Ascending aorta (tissue), 2 donors: ENCODE measurements at regions of chr13 and their contacts with region 1.

Region 1: DNA sequence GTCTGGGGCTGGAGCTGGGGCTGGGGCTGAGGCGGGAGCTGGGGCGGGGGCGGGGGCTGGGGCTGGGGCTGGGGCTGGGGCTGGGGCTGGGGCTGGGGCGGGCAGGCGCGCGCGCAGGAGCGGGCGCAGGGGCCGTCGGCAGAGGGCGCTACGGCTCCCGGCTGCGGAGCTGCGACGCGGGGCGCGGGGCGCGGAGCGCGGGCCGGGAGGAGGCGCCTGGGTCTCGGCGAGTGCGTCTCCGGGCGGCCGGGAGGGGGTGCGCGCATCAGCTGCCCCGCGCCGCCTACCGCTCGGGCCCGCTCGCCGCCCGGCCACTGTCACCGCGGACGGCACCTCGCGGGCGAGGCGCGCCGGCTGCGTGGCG is 422 bp upstream of the MTUS2 start:
- DNase-seq: peak in 1 of 2 donors; percentile 76
- H3K4me3 ChIP-seq: peak overlapping the region; percentile 63 to 84
- H3K27ac ChIP-seq: peak overlapping the region; percentile 44 to 78
- H3K4me1 ChIP-seq: peaks cover 0 to 5% of the 10 kb centered on the region in 2 donors
- H3K27me3 ChIP-seq: no peaks in the 10 kb centered on the region
- CTCF ChIP-seq: peak in 2 of 3 experiments; percentile 10 to 75

Region 2: DNA sequence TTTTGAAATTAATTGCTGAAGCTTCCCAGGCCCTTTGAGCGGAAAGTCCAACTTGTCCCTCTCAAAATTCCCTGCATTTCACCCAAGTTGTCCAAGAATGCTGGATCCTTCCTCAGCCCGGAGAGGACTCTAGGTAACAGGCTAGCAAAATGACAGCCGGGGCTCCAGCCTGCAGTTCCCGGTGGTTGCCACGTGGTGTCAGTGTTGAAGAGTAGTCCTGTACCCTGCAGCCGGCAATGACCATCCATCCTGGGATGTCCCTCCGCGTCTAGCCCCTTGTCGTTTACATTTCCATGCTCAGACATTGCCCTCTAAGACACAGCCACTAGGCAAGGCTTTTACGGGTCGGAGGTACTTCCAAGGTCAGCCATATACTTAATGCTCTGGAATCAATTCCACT is 1338.0 kb before region 1 on chr13:
- intact Hi-C with region 1: no loop called
- DNase-seq: peak in 1 of 2 donors; percentile 63
- H3K4me3 ChIP-seq: no peak overlapping the region
- H3K27ac ChIP-seq: no peak overlapping the region
- H3K4me1 ChIP-seq: no peaks in the 10 kb centered on the region
- H3K27me3 ChIP-seq: no peaks in the 10 kb centered on the region
- CTCF ChIP-seq: peak in 2 of 3 experiments; percentile 21 to 29

Region 3: GRCh38 chr13:28872427-28873176 is 52.9 kb after region 1 on chr13:
- intact Hi-C with region 1: loop called (anchors 2 kb)
- DNase-seq: no peak
- H3K4me3 ChIP-seq: no peak overlapping the region
- H3K27ac ChIP-seq: no peak overlapping the region
- H3K4me1 ChIP-seq: peaks cover 0 to 4% of the 10 kb centered on the region in 2 donors
- H3K27me3 ChIP-seq: no peaks in the 10 kb centered on the region
- CTCF ChIP-seq: no peak

Region 4: DNA sequence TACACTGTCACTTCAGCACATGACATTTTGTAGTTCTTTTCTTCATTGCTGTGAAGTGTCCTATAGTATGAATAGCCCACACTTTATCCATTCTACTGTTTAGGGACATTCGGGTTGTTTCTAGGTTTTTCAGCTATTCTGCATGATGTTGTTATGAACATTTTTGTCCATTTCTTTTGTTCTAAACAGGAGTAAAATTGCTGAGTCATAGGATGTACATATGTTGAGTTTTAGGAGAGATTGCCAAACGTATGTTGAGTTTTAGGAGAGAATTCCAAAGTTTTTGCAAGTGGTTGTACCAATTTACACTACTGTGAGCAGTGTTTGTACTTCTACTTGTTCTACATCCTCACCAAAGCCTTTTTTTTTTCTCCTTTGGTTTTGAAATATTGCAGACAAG is 115.4 kb after region 1 on chr13:
- intact Hi-C with region 1: loop called (anchors 5 kb)
- DNase-seq: no peak
- H3K4me3 ChIP-seq: no peak overlapping the region
- H3K27ac ChIP-seq: no peak overlapping the region
- H3K4me1 ChIP-seq: no peaks in the 10 kb centered on the region
- H3K27me3 ChIP-seq: no peaks in the 10 kb centered on the region
- CTCF ChIP-seq: no peak

Region 5: DNA sequence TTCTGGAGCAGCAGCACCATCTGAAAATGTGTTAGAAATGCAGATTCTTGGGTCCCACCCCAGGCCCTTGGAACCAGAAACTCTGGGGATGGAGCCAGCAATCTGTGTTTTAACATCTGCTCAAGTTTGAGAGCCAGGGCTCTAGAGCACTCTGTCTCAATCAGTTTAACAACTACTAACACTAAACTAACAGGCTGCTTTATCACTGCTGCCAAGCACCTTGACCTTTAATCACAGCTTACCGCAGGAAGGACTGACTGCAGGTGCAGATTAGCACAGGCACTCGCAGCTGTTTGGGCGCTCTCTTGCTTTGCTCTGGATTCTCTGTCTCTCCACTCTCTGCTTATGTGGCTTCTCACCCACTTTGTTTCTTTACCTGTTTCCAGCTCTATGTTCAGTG is 163.9 kb after region 1 on chr13:
- intact Hi-C with region 1: loop called (anchors 5 kb)
- DNase-seq: no peak
- H3K4me3 ChIP-seq: peak overlapping the region in 1 of 2 donors; percentile 37
- H3K27ac ChIP-seq: peak overlapping the region; percentile 60 to 75
- H3K4me1 ChIP-seq: peaks cover 10 to 47% of the 10 kb centered on the region in 2 donors
- H3K27me3 ChIP-seq: no peaks in the 10 kb centered on the region
- CTCF ChIP-seq: no peak

Region 6: DNA sequence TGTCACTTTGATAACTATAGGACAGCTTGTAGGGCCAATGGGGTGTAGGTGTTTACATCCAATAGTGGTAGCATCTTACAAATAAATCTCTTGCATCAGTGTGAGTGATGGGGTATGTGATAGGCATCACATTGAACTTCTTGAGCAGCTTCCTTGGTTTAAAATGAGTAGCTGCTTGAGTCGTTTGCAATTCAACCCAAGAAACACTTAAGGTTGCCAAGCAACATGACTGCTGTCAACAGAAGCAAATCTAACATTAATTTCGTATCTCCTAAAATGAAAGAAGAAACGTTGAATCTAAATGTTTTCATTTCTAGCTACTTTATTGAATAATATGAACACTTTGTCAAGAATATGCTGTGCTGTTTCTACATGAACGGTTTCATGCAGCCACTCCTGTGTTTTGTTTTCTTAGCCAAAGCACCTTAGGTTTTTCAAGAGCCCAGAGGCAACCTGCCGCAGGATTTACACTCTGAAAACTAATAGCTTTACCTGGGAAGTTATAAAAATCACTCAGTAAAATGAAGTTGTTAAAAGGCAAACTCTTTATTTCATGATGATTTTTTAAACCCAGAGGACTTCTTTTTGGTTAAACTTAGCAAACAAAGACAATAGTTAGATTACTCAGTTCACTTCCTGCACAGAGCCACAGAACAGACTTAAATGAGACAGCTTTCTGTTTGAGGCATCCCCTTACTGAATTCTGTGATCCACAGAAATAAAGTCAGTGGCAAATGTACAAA is 305.6 kb after region 1 on chr13:
- intact Hi-C with region 1: loop called (anchors 5 kb)
- DNase-seq: no peak
- H3K4me3 ChIP-seq: no peak overlapping the region
- H3K27ac ChIP-seq: peak overlapping the region; percentile 49 to 69
- H3K4me1 ChIP-seq: peaks cover 0 to 3% of the 10 kb centered on the region in 2 donors
- H3K27me3 ChIP-seq: no peaks in the 10 kb centered on the region
- CTCF ChIP-seq: no peak

Region 7: GRCh38 chr13:29260683-29261082 is 441.0 kb after region 1 on chr13:
- intact Hi-C with region 1: loop called (anchors 1 kb)
- DNase-seq: peak in 1 of 2 donors; percentile 66
- H3K4me3 ChIP-seq: no peak overlapping the region
- H3K27ac ChIP-seq: no peak overlapping the region
- H3K4me1 ChIP-seq: no peaks in the 10 kb centered on the region
- H3K27me3 ChIP-seq: no peaks in the 10 kb centered on the region
- CTCF ChIP-seq: peak in 2 of 3 experiments; percentile 49 to 53

Region 8: DNA sequence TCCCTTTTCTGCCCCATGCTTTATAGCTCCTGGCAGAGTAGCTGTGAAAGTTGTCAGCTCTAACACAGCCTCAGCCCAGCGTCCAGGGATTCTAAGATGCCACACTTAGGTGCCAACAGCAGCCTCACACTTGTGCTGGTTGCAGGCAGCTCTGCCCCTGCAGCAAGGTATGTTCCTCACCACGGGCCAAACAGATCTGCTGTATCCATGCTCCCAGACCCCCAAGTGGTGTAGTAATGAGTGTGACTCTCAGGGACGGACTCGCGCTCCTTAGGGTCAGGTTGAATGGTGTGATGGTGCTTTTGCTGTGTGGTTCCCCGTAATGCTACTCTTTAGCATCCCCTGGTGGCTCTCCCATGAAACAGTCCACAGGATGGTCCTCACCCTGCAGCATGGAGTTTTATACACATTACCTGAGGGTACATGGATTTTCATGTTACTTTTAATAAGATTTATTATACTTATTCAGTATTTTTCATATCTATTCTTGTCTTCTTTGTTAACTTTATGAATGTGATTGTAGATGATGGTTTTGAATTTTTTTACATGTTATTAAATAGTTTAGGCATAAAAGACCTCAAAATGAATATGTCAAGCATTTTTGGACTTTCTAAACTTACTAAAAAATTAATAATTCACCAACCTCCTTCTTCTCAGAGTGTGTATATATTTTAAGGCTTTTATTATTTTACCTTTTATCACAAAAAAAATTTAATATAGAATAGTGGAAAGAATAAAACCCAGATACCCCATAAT is 543.3 kb after region 1 on chr13:
- intact Hi-C with region 1: loop called (anchors 1 kb)
- DNase-seq: peak in 1 of 2 donors; percentile 74
- H3K4me3 ChIP-seq: peak overlapping the region; percentile 7 to 54
- H3K27ac ChIP-seq: peak overlapping the region in 1 of 2 donors; percentile 37
- H3K4me1 ChIP-seq: peaks cover 0 to 4% of the 10 kb centered on the region in 2 donors
- H3K27me3 ChIP-seq: no peaks in the 10 kb centered on the region
- CTCF ChIP-seq: peak; percentile 78 to 94 (median 93)